Mammary epithelial cell (primary cell): ENCODE measurements at regions of chr2 and their contacts with region 1.

Region 1: GRCh38 chr2:236265675-236266074 is 1.5 kb upstream of the ASB18 start:
- DNase-seq: no peak
- H3K4me3 ChIP-seq: no peak overlapping the region
- H3K27ac ChIP-seq: no peak overlapping the region
- H3K4me1 ChIP-seq: no peaks in the 10 kb centered on the region
- H3K27me3 ChIP-seq: no peaks in the 10 kb centered on the region
- CTCF ChIP-seq: no peak

Region 2: DNA sequence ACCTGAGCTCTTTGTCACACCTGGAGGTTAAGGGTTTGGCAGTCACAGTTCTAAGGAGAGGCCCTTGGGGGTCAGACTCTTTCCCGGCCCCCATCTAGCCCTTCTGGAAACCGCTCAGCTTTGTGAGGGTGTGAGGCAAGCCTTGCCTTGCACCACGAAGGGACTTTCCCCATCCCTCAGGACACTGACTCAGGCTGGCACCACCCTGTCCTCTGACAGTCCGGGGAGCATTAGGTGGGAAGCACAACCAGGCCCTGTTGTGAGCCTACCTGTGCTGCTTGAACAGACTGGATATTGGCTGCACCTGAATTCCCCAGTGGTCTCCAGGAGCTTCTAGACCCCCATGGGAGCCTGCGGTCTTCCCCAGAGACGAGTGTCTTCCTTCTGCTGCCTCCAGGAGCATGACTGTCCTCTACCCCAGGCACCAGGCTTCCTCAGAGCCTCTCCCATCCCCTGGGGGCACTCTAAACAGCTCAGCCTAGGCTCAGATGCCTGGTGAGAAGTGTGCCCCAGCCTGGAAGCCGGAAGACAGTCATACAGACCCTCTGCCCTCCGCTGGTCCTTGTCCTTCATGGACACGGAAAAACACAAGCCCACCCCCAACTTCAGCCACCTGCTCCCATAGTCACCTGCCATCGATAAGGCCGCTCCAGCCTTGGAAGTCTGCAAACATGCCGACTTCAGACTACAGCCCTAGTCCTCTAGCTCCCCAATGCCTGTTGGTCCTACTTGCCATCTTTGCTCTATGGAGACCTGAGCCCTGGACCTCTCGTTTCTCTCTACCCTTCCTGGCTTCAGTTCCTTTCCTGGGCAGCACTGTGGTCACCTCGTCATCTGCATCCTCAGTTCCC is 50.3 kb before region 1 on chr2:
- CTCF ChIA-PET with region 1: no interaction called
- dilution Hi-C with region 1: loop called (anchors 5 kb)
- in situ Hi-C with region 1: no loop called
- intact Hi-C with region 1: no loop called
- DNase-seq: peak; percentile 70
- H3K4me3 ChIP-seq: no peak overlapping the region
- H3K27ac ChIP-seq: no peak overlapping the region
- H3K4me1 ChIP-seq: peaks cover 9% of the 10 kb centered on the region
- H3K27me3 ChIP-seq: no peaks in the 10 kb centered on the region
- CTCF ChIP-seq: no peak

Region 3: DNA sequence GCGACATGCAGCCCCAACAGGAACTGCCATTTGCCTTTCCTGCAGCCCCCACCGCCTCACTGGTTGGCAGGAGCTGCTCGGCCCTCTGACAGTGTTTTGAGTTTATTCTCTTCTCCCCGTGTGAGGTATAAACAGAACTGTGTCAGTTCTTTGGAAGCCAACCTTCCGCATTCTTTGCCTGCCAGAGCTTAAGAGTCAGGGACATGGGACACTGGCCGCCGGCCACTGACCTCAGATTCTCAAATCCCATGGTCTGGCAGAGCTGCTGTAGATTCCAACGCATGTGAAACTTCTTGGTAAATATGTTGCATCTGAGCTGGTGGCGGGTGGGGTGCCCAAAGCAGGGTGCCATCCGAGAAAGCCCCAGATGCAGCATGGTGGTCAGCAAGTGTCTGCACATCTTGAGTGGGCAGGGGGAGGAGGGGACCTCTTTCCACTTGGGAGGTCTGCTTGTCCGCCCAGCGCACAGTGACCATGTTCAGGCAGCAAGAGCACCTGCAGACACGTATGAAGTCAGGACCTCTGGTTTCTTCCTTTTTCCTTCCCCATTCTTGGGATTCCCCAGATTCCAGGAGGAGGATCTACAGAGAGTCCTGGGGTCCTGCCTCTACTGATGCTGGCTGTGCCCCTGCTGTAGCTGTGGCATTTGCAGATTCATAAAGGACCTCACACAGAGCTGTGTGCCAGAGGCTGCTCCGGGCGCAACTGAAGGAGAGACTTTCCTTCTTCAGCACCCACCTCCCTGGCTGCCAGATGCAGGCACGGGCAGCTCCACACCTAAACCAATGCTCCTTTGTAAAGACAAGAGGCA is 25.2 kb before region 1 on chr2:
- CTCF ChIA-PET with region 1: no interaction called
- dilution Hi-C with region 1: no loop called
- in situ Hi-C with region 1: no loop called
- intact Hi-C with region 1: no loop called
- DNase-seq: no peak
- H3K4me3 ChIP-seq: no peak overlapping the region
- H3K27ac ChIP-seq: no peak overlapping the region
- H3K4me1 ChIP-seq: peaks cover 3% of the 10 kb centered on the region
- H3K27me3 ChIP-seq: peaks cover 37% of the 10 kb centered on the region
- CTCF ChIP-seq: no peak

Region 4: GRCh38 chr2:236309669-236310029 is 44.0 kb after region 1 on chr2:
- CTCF ChIA-PET with region 1: no interaction called
- dilution Hi-C with region 1: loop called (anchors 5 kb)
- in situ Hi-C with region 1: no loop called
- intact Hi-C with region 1: no loop called
- DNase-seq: peak; percentile 8
- H3K4me3 ChIP-seq: no peak overlapping the region
- H3K27ac ChIP-seq: no peak overlapping the region
- H3K4me1 ChIP-seq: peaks cover 2% of the 10 kb centered on the region
- H3K27me3 ChIP-seq: no peaks in the 10 kb centered on the region
- CTCF ChIP-seq: peak; percentile 51 to 58